ENCODE measurements at regions of chr6 and their contacts with region 1.

Region 1: DNA sequence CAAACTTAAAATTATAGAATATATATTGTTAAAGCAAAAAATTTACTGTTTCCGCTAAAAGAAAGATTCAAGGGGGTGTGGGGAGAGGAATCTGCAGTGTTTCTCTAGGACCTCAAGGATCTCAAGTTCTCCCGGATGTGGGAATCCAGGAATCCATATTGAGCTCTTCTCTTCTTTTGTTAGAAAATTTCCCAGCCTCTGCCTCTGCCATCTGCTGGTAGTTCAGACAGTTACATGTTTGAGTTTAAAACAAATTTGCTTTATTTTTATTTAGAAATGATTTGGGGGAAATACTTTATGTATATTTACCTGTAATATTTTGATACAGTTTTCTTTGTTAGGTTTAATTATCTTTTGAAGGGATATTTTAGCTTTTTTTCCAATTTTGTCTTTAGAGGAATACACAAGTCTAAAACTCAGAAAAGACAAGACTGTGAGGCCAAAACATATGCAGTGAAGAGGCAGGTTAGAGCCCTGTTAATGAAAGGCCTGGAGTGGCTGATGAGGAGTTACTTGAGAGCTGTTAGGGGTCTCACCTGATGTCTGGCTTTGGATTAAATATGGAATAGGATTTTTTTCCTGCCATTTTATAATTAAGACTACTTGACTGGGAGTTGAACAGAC is 268.8 kb downstream of the ARID1B start:
- DNase-seq: no peak
- H3K4me3 ChIP-seq: no peak overlapping the region
- H3K27ac ChIP-seq: no peak overlapping the region
- H3K27me3 ChIP-seq: no peaks in the 10 kb centered on the region
- CTCF ChIP-seq: peak; percentile 46 to 77 (median 65)

Region 2: GRCh38 chr6:157099912-157100593 is 54.1 kb after region 1 on chr6:
- intact Hi-C with region 1: loop called in 1 of 2 experiments (anchors 10 kb)
- DNase-seq: no peak
- H3K4me3 ChIP-seq: no peak overlapping the region
- H3K27ac ChIP-seq: no peak overlapping the region
- H3K27me3 ChIP-seq: no peaks in the 10 kb centered on the region
- CTCF ChIP-seq: no peak

Region 3: DNA sequence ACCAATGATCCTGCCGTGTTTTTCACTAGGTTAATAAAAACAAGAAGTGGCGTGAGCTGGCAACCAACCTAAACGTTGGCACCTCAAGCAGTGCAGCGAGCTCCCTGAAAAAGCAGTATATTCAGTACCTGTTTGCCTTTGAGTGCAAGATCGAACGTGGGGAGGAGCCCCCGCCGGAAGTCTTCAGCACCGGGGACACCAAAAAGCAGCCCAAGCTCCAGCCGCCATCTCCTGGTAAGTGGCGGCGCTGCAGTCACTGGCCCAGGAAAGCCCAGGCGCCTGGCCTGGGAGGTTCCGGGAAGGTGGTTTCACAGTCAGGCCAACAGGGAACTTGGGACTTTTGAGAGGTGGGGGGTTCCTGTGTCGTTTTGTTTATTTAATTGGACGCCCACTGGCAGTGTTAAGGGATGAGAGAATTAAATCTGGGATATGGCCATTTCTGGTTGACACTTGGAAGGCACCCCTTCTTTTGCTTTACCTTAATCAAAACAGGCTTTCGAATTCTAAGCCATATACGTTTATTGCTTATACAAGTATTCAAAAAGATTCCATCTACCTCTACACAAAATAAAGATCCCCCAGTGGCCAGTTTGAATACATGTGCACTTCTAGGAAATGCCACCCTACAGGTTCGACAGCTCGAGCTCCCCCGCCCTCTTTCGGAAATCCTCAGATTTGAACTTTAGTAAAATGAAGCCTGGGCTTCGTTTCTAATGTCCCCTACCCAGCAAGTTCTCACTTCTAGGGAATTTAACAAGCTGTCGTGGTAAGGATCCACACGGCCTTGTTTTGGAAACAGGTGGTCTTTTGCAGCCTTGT is 138.5 kb after region 1 on chr6:
- intact Hi-C with region 1: loop called in 1 of 2 experiments (anchors 5 kb)
- DNase-seq: peak; percentile 67 to 82 (median 76)
- H3K4me3 ChIP-seq: peak overlapping the region in 53 of 59 donors; percentile 2 to 62 (median 40)
- H3K27ac ChIP-seq: peak overlapping the region in 31 of 59 donors; percentile 1 to 72 (median 42)
- H3K27me3 ChIP-seq: no peaks in the 10 kb centered on the region
- CTCF ChIP-seq: peak; percentile 57 to 98 (median 91)

Region 4: DNA sequence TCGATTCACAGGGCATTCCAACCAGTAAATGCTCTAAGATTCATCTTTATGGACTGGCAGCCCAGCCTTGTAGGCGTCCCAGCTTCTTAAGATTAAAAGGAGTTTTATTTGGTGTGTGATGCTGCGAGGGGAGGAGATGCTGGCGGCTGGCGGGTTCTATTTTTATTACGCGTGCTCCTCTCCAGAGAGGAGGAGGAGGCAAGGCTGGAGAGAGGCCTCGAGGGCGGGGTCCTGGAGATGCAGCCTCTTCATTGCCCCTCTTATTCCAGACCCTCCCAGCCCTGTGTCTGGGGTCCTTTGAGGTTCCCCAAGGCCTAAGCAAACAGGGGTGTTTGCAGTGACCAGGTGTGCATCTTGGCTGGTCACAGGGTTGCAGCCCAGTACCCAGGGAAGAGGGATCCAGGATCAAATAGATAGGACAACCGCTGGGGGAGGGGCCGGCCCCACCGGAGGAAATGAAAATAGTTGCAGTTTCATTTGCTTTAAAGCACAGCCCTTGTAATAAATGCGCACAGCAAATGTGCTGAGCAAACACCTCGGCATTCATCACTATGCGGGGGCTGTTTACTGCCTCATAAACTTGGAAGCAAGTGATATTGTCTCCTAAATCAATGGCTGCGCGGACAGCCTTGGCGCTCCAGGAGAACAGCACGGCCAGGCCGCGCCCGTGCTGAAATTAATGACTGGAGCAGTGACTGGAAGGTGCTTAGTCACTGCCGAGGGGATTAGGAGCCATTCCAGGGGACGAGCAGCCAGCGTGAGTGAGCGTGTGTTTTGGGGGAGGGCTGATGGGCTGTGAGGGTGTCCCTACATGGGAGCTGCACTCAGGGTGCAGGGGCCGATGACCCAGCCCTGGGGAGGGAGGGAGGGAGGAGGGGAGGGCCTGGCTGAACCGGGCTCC is 194.4 kb after region 1 on chr6:
- intact Hi-C with region 1: no loop called
- DNase-seq: peak in 6 of 10 donors; percentile 43 to 66 (median 54)
- H3K4me3 ChIP-seq: peak overlapping the region in 45 of 59 donors; percentile 1 to 50 (median 33)
- H3K27ac ChIP-seq: peak overlapping the region in 58 of 59 donors; percentile 9 to 88 (median 76)
- H3K27me3 ChIP-seq: no peaks in the 10 kb centered on the region
- CTCF ChIP-seq: no peak

Measured in dorsolateral prefrontal cortex (tissue), 120 donors.